ENCODE measurements at regions of chr18 and their contacts with region 1.

Region 1: GRCh38 chr18:55869556-55870501 is 281.8 kb upstream of the TCF4 start:
- DNase-seq: peak in 4 of 5 donors; percentile 35 to 46 (median 40)
- ATAC-seq: peak; percentile 68 to 88 (median 78)
- H3K4me3 ChIP-seq: no peak overlapping the region
- H3K27ac ChIP-seq: peak overlapping the region in 9 of 12 donors; percentile 3 to 77 (median 54)
- H3K4me1 ChIP-seq: peaks cover 0 to 39% (median 6%) of the 10 kb centered on the region in 12 donors
- H3K27me3 ChIP-seq: no peaks in the 10 kb centered on the region
- CTCF ChIP-seq: no peak
- POLR2A ChIP-seq: no peak

Region 2: GRCh38 chr18:55763298-55763697 is 106.5 kb before region 1 on chr18:
- intact Hi-C with region 1: no loop called
- DNase-seq: no peak
- ATAC-seq: no peak
- H3K4me3 ChIP-seq: no peak overlapping the region
- H3K27ac ChIP-seq: no peak overlapping the region
- H3K4me1 ChIP-seq: no peaks in the 10 kb centered on the region
- H3K27me3 ChIP-seq: no peaks in the 10 kb centered on the region
- CTCF ChIP-seq: no peak
- POLR2A ChIP-seq: no peak

Region 3: DNA sequence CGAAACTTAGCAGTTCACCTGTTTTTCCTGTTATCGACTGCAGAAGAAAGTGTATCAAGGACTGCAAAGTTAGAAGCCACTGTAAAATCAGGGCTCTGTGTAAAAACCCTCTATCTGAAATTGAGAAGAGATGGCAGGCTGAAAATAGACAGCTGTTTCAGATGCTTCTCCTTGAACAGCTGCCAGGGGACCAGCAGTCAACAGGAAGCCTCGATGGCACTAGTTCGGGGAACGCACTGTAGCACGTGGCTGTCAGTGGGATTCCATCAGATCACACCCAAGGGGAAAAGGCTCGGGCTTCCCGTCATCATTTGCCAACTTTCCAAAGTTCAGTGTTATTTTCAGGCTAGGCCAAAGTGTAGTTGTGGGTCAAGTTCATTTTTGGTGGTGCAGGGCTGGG is 451.6 kb after region 1 on chr18:
- intact Hi-C with region 1: loop called in 1 of 10 experiments (anchors 10 kb)
- DNase-seq: peak; percentile 57 to 79 (median 70)
- ATAC-seq: peak; percentile 47 to 86 (median 68)
- H3K4me3 ChIP-seq: no peak overlapping the region
- H3K27ac ChIP-seq: peak overlapping the region in 4 of 12 donors; percentile 2 to 60 (median 29)
- H3K4me1 ChIP-seq: peaks cover 0 to 30% (median 14%) of the 10 kb centered on the region in 12 donors
- H3K27me3 ChIP-seq: no peaks in the 10 kb centered on the region
- CTCF ChIP-seq: no peak
- POLR2A ChIP-seq: no peak